ENCODE measurements at regions of chr11 and their contacts with region 1.

Region 1: DNA sequence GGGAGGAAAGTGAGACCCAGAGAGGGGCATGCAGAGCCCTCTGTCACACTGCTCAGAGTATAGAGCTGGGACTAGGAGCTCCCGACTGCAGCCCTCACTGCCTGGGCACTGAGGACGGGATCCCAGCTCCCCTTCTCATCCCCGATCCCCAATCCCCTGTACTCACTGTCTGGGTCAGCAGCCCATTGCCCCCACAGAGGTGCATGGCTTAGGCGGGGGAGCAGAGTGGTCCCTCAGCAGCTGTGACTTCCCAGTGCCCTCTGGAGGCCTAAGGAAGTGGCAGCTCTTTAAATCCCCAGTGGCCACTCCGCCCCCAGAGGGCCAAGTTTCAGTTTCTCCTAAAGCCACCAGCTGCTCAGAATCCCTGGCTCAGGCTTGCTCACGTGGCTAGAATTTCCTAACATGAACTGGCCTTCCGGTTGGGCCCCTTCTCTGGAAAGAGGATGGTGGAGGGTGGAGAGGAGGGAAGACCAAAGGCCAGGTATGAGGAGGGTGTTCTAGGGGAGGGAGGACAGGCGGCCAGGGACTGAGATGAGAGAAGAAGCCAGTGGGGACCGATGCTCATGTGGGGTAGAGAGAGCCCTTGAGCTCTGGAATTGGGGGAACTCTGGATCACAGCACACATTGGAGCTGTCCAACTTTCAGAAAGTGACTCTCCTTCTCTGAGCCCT is at the start of gene BATF2:
- DNase-seq: peak; percentile 92
- H3K4me3 ChIP-seq: peak within 1 kb of the TSS; percentile 31 to 55 (median 50)
- H3K27ac ChIP-seq: peak within 1 kb of the TSS; percentile 53 to 81 (median 76)
- H3K4me1 ChIP-seq: peaks cover 0 to 26% (median 17%) of the 10 kb centered on the region in 4 donors
- H3K27me3 ChIP-seq: no peaks in the 10 kb centered on the region
- CTCF ChIP-seq: peak; percentile 49 to 67 (median 58)
- EP300 ChIP-seq: no peak
- POLR2A ChIP-seq: peak in 1 of 2 donors; percentile 74
- total RNA-seq, gene BATF2: 1.8 to 4.7 (median 3.7) TPM

Region 2: DNA sequence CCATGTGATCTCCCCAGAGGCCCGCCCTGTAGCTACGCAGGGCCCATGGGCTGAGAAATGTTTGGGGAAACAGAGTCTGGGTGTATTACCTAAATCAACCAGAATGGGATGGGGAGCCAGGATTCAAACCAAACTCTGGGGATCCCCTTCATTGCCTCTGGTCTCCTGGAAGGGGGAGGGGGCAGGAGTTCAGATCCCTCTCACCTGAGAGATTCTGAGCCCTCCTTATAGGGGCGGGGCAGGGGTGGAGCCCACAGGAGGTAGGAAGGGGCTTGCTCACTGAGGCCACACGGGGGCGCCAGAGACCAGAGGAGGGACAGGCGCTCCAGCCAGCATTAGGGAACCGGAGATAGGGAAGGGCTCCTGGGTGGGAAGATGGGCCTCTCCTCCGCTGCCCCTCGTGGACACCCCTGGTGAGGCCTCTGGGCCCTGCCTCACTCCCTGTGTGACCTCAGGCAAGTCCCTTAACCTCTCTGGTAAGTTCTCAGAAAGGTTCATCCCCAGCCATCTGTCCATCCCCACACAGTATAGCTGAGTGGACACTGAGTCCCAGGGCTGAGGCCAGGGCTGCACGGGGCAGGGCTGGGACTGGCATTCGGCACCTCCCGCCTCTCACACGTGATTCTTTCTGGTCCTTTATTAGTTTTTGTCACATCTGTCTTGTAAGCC is 149.7 kb before region 1 on chr11:
- intact Hi-C with region 1: loop called (anchors 2 kb)
- DNase-seq: peak; percentile 96
- H3K4me3 ChIP-seq: no peak overlapping the region
- H3K27ac ChIP-seq: peak overlapping the region in 2 of 4 donors; percentile 10 to 22
- H3K4me1 ChIP-seq: peaks cover 0 to 52% (median 35%) of the 10 kb centered on the region in 4 donors
- H3K27me3 ChIP-seq: peaks cover 0 to 10% (median 0%) of the 10 kb centered on the region in 3 donors
- CTCF ChIP-seq: peak; percentile 92 to 97 (median 96)
- EP300 ChIP-seq: no peak
- POLR2A ChIP-seq: no peak

Region 3: DNA sequence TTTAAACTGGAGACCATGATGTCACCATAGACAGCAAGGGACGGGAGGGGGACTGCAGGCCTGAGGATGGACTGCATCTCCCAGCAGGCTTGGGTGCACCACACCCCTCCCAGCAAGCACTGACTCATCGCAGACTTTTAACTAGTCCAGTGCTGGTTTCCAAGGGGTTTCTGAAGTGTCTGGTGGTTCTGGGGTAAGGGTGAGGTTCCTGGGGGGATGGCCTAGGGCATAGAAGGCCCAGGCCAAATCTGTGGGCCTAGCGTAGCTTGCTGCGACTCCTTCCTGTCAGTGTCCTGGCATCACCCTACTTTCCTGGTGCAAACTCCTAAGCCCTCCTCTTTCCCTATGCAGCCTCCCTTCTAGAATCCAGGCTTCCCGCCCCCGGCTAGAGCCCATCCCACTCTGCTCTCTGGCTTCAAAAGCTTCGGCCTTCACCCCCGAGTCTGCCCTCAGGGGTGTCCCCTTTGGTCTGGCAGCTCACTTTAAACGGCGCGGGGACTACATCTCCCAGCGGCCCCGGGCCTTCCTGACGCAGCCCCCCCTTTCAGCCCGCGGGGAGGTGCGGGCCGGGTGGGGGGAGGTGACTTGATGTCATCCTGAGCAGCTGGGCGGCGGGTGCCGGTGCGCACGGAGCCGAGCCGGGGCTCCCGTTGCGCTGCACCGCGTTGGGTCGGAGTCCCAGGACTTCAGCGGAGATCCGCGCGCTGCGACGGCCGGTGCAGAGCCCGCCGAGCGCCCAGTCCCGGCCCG is 72.6 kb before region 1 on chr11 and contains the start of gene PPP2R5B:
- intact Hi-C with region 1: loop called (anchors 2 kb)
- DNase-seq: peak; percentile 98
- H3K4me3 ChIP-seq: peak within 1 kb of the TSS; percentile 64 to 93 (median 84)
- H3K27ac ChIP-seq: peak within 1 kb of the TSS; percentile 89 to 97 (median 94)
- H3K4me1 ChIP-seq: peaks cover 0 to 23% (median 22%) of the 10 kb centered on the region in 4 donors
- H3K27me3 ChIP-seq: no peaks in the 10 kb centered on the region
- CTCF ChIP-seq: no peak
- EP300 ChIP-seq: peak in 1 of 4 donors; percentile 49
- POLR2A ChIP-seq: peak; percentile 67 to 81
- total RNA-seq, gene PPP2R5B: 17.8 to 27.3 (median 21.3) TPM

Region 4: DNA sequence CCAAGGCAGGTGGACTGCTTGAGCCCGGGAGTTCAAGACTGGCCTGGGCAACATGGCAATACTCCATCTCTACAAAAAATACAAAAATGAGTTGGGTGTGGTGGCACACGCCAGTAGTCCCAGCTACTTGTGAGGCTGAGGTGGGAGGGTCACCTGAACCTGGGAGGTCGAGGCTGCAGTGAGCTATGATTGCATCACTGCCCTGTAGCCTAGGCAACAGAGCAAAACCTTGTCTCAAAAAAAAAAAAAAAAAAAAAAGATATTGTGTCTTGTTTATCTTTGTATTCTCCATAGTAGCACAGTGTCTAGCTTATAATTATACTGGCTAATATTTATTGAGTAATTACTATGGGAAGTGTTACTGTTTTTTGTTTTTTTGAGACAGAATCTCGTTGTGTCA is 45.3 kb before region 1 on chr11:
- intact Hi-C with region 1: loop called (anchors 5 kb)
- DNase-seq: no peak
- H3K4me3 ChIP-seq: no peak overlapping the region
- H3K27ac ChIP-seq: no peak overlapping the region
- H3K4me1 ChIP-seq: peaks cover 0 to 16% (median 8%) of the 10 kb centered on the region in 4 donors
- H3K27me3 ChIP-seq: no peaks in the 10 kb centered on the region
- CTCF ChIP-seq: no peak
- EP300 ChIP-seq: no peak
- POLR2A ChIP-seq: no peak

Measured in sigmoid colon (tissue), 7 donors.